ENCODE measurements at regions of chr1 and their contacts with region 1.

Region 1: DNA sequence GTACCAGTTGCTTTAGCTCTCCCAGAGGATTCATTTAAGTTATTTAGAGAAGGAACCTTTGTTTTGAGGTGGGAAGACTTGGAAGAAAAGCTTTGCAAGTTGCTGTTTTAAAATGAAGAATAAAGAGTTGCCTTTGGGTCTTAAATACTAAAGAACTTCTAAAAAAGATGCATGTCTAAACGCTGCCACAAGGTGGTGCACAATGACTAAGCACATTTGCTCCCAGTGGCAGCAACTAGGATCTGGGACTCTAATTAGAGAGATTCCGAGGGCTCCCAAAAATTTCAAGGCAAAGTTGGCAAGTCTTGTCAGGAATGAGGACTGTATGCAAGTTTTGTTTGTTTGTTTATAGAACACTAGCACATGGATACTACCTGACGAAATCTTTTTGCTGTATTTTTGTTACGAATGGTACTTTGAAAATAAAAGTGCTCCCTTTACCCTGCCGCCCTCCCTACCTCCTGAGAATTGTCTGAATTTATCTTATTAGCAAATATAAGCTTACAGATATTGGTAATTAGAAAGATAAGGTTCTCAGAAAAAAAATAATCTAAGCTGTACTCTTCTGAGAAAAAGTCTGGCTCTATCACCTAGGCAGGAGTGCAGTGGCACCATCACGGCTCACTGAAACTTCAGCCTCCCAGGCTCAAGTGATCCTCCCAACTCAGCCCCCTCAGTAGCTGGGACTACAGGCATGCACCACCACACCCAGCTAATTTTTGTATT is 121.8 kb downstream of the HFM1 start:
- DNase-seq: peak in 4 of 5 donors; percentile 32 to 49 (median 44)
- ATAC-seq: peak in 3 of 4 donors; percentile 55 to 82 (median 72)
- H3K4me3 ChIP-seq: peak overlapping the region in 8 of 12 donors; percentile 14 to 42 (median 24)
- H3K27ac ChIP-seq: no peak overlapping the region
- H3K4me1 ChIP-seq: peaks cover 0 to 9% (median 0%) of the 10 kb centered on the region in 12 donors
- H3K27me3 ChIP-seq: no peaks in the 10 kb centered on the region
- CTCF ChIP-seq: peak; percentile 65 to 87 (median 79)
- POLR2A ChIP-seq: no peak

Region 2: GRCh38 chr1:91234181-91234580 is 48.7 kb before region 1 on chr1:
- intact Hi-C with region 1: no loop called
- DNase-seq: no peak
- ATAC-seq: no peak
- H3K4me3 ChIP-seq: no peak overlapping the region
- H3K27ac ChIP-seq: no peak overlapping the region
- H3K4me1 ChIP-seq: no peaks in the 10 kb centered on the region
- H3K27me3 ChIP-seq: no peaks in the 10 kb centered on the region
- CTCF ChIP-seq: no peak
- POLR2A ChIP-seq: no peak

Region 3: DNA sequence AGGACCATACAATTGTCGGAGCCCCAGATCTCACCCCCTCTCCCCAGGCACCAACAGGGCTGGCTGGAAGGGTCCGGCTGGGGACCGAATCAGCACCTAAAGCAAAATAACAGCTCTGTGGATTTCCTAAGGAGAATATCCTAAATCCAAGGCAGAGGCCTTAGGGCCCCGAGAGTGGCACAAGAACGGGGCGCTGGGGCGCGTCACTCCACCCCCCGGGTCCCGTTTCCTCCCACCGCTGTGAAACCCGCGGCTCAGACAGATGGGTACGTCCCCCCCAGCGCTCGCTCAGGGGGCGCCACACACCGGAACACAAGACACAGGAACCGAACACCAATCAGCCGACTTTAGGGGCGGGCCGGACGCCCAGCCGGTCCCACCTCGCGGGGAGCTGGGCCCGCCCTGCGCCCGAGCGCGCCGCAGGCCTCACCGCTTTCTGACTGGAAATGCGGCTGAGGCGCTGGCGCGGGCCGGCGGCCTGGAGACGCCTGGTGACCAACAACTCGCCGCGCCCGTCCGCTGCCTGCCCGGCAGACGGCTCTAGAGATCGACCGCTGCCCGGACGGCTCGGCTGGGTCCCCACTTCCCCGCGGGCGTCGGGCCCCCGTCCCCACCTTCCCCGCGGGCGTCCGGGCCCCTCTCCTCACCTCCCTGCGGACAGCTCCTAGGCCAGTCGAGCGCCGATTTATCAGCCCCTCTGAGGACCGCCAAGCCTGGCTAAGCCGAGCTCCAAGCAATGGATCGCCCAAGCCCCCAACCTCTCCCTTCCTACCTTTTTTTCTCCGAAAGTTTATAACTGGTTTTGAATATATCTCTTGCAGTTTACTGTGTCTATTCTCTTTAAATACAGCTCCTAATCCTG is 121.5 kb after region 1 on chr1 and contains the start of gene HFM1:
- intact Hi-C with region 1: loop called (anchors 1 to 5 kb)
- DNase-seq: peak; percentile 81 to 90 (median 90)
- ATAC-seq: peak; percentile 97 to 99 (median 99)
- H3K4me3 ChIP-seq: peak within 1 kb of the TSS; percentile 49 to 86 (median 64)
- H3K27ac ChIP-seq: peak within 1 kb of the TSS; percentile 44 to 91 (median 86)
- H3K4me1 ChIP-seq: peaks cover 0 to 19% (median 0%) of the 10 kb centered on the region in 12 donors
- H3K27me3 ChIP-seq: peaks cover 0 to 17% (median 0%) of the 10 kb centered on the region in 9 donors
- CTCF ChIP-seq: peak in 4 of 12 donors; percentile 28 to 42 (median 34)
- POLR2A ChIP-seq: peak in 1 of 2 donors; percentile 60
- total RNA-seq, gene HFM1: 1.5 to 5.8 (median 2.4) TPM

Region 4: DNA sequence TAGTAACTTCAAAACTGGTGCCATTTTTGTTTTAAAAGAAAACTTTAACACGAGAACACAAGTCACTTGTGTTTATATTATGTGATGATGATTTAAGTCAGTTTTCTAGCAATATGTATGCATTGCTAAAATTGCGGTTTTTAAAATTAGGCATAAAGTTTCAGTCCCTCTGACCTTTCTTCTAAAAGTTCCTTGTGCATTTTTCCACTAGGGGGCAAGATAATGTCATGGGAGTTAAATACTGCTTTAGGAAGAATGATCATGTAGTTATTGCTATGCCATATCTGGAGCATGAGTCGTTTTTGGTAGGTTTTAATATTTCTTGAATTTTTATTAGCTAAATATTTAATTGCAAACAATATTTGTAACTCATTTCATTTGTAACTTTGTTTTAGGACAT is 228.5 kb after region 1 on chr1:
- intact Hi-C with region 1: loop called in 5 of 10 experiments (anchors 5 to 10 kb)
- DNase-seq: no peak
- ATAC-seq: peak in 1 of 4 donors; percentile 58
- H3K4me3 ChIP-seq: no peak overlapping the region
- H3K27ac ChIP-seq: no peak overlapping the region
- H3K4me1 ChIP-seq: no peaks in the 10 kb centered on the region
- H3K27me3 ChIP-seq: no peaks in the 10 kb centered on the region
- CTCF ChIP-seq: peak; percentile 53 to 78 (median 60)
- POLR2A ChIP-seq: no peak

Region 5: DNA sequence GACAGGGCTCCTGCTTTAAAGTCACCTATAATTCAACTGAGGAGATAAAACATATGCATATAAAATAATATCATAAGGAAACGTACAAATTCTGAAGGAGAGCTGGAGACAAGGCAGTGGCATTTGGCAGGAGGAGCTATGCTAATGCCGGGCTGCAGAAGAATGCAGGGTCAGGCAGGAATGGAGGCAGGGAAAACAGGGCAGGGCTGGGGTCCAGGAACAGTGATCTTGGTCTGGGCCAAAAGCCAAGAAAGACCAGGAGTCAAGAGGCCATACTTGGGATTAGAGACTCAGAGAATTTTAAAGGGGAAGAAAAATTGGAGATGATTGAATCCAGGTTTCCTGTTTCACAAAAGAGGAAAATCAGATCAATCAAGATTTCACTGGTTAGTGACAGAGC is 646.4 kb after region 1 on chr1:
- intact Hi-C with region 1: loop called in 9 of 10 experiments (anchors 2 to 5 kb)
- DNase-seq: no peak
- ATAC-seq: peak in 2 of 4 donors; percentile 30 to 58
- H3K4me3 ChIP-seq: no peak overlapping the region
- H3K27ac ChIP-seq: no peak overlapping the region
- H3K4me1 ChIP-seq: peaks cover 0 to 7% (median 0%) of the 10 kb centered on the region in 12 donors
- H3K27me3 ChIP-seq: no peaks in the 10 kb centered on the region
- CTCF ChIP-seq: no peak
- POLR2A ChIP-seq: no peak

Region 6: GRCh38 chr1:92298573-92299476 is 1016.0 kb after region 1 on chr1 and contains the starts of genes GLMN and RPAP2:
- intact Hi-C with region 1: loop called in 2 of 10 experiments (anchors 5 to 10 kb)
- DNase-seq: peak; percentile 79 to 91 (median 85)
- ATAC-seq: peak; percentile 98 to 100 (median 100)
- H3K4me3 ChIP-seq: peak within 1 kb of the TSS; percentile 59 to 97 (median 86)
- H3K27ac ChIP-seq: peak within 1 kb of the TSS; percentile 85 to 95 (median 92)
- H3K4me1 ChIP-seq: peaks cover 0 to 23% (median 13%) of the 10 kb centered on the region in 12 donors
- H3K27me3 ChIP-seq: no peaks in the 10 kb centered on the region
- CTCF ChIP-seq: peak in 5 of 12 donors; percentile 5 to 36 (median 12)
- POLR2A ChIP-seq: peak; percentile 76 to 92
- total RNA-seq, gene GLMN: 3.0 to 7.2 (median 5.6) TPM
- total RNA-seq, gene RPAP2: 6.7 to 27.7 (median 23.3) TPM